K562 (cell line): ENCODE measurements at regions of chr7 and their contacts with region 1.

Region 1: DNA sequence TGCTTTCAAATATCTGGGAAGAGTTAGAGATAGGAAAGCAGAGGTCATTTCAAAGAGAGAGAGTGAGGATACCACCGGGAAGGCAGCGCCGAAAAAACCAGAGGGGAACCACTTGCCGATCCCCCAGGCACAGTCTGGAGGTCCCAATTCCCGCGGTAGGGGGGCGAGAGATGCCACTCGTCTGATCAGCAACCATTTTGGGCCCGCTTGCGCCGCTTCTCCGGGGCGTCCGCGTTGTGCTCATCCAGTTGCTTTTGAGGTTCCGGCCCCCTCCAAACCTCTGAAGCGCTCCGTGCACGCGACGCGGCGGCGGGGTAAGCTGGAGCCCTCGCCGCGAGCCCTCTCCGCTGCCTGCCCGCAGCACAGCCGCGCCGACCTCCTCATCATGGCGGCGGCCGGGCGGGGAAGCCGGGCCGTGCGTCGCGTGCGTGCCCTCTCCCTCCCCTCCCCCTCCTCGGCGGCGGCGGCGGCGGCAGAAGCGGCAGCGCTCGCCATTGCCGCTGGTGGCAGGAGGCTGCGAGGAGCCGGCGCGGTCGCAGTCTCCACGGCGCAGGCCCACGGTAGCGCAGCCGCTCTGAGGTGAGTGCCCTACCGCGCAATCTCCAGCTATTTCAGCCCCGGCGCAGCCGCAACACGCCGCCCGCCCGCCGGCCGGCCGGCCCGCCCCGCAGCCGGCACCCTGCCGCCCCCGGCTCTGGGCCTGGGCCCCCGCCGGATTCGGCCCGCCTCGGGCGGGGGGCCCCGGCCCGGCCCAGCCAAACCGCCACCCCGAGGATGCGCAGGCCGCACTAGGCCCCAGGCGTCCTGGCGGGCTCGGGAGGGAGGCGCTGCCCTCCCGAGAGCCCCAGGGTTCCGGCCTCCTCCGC is at the start of gene NRF1:
- DNase-seq: peak; percentile 93 to 97 (median 94)
- ATAC-seq: peak; percentile 92
- H3K4me3 ChIP-seq: peak within 1 kb of the TSS; percentile 78
- H3K27ac ChIP-seq: peak within 1 kb of the TSS; percentile 93
- H3K4me1 ChIP-seq: peaks cover 18 to 33% of the 10 kb centered on the region in 2 experiments
- H3K27me3 ChIP-seq: no peaks in the 10 kb centered on the region
- CTCF ChIP-seq: peak; percentile 14 to 53 (median 41); a peak in 3 of 6 replicates
- EP300 ChIP-seq: peak; percentile 36; the same call in 1 of the 2 replicates
- POLR2A ChIP-seq: peak; percentile 93
- RAD21 ChIP-seq: no peak
- polyA plus RNA-seq, gene NRF1: 8.6 to 8.9 TPM

Region 2: GRCh38 chr7:129494041-129494440 is 117.4 kb before region 1 on chr7:
- CTCF ChIA-PET with region 1: no interaction called
- POLR2A ChIA-PET with region 1: no interaction called
- in situ Hi-C with region 1: no loop called
- intact Hi-C with region 1: loop called (anchors 5 kb)
- DNase-seq: no peak
- ATAC-seq: no peak
- H3K4me3 ChIP-seq: no peak overlapping the region
- H3K27ac ChIP-seq: no peak overlapping the region
- H3K4me1 ChIP-seq: no peaks in the 10 kb centered on the region; a peak in 1 of 5 replicates
- H3K27me3 ChIP-seq: no peaks in the 10 kb centered on the region
- CTCF ChIP-seq: no peak
- EP300 ChIP-seq: no peak
- POLR2A ChIP-seq: no peak
- RAD21 ChIP-seq: no peak

Region 3: GRCh38 chr7:129644634-129645230 is 33.3 kb after region 1 on chr7:
- CTCF ChIA-PET with region 1: no interaction called
- POLR2A ChIA-PET with region 1: interaction called, 4 read pairs
- in situ Hi-C with region 1: no loop called
- intact Hi-C with region 1: loop called (anchors 2 kb)
- DNase-seq: peak in 3 of 4 experiments; percentile 31 to 71 (median 35)
- ATAC-seq: peak; percentile 81
- H3K4me3 ChIP-seq: no peak overlapping the region
- H3K27ac ChIP-seq: no peak overlapping the region
- H3K4me1 ChIP-seq: no peaks in the 10 kb centered on the region
- H3K27me3 ChIP-seq: no peaks in the 10 kb centered on the region
- CTCF ChIP-seq: peak; percentile 61 to 86 (median 66); a peak in 5 of 6 replicates
- EP300 ChIP-seq: no peak
- POLR2A ChIP-seq: no peak
- RAD21 ChIP-seq: peak; percentile 86 to 91

Region 4: DNA sequence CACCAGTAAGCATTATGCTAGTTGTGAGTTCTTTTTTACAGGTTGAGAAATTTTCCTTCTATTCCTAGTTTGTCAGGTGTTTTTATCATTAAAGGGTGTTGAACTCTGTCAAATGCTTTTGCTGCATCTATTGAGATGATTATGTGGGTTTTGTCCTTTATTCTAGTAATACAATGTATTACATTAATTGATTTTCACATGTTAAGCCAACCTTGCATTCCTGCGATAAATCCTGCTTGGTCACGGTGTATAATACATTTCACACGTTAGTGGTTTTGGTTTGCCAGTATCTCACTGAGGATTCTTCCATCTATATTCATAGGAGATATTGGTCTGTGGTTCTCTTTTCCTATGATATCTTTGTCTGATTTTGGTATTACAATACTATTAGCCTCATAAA is 205.3 kb after region 1 on chr7:
- CTCF ChIA-PET with region 1: no interaction called
- POLR2A ChIA-PET with region 1: no interaction called
- in situ Hi-C with region 1: no loop called
- intact Hi-C with region 1: no loop called
- DNase-seq: no peak
- ATAC-seq: no peak
- H3K4me3 ChIP-seq: no peak overlapping the region
- H3K27ac ChIP-seq: no peak overlapping the region
- H3K4me1 ChIP-seq: no peaks in the 10 kb centered on the region; a peak in 2 of 5 replicates
- H3K27me3 ChIP-seq: 0 out of 5 replicates have a peak, but pooled peaks cover 0 to under 1% of the 10 kb centered on the region in 2 experiments
- CTCF ChIP-seq: no peak
- EP300 ChIP-seq: no peak
- POLR2A ChIP-seq: no peak
- RAD21 ChIP-seq: no peak

Region 5: DNA sequence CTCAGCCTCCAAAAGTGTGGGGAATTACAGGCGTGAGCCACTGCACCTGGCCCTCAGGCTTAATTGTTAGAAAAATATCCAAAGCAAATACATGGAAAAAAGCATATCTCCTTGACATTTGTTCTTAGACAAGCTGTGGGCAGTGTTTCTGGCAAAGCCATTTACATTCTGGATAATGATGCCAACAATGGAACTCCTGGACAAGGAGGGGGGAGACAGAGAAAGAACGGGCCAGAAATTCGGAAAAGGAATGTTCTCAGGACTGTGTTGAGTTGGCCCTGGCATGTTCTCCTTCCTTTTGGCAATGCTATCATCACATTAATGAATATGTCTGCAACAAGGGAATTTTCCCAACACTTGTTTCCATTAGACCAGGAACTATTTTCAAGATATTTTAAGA is 252.6 kb after region 1 on chr7:
- CTCF ChIA-PET with region 1: no interaction called
- POLR2A ChIA-PET with region 1: no interaction called
- in situ Hi-C with region 1: no loop called
- intact Hi-C with region 1: no loop called
- DNase-seq: no peak
- ATAC-seq: no peak
- H3K4me3 ChIP-seq: no peak overlapping the region
- H3K27ac ChIP-seq: no peak overlapping the region
- H3K4me1 ChIP-seq: peaks cover 11 to 50% of the 10 kb centered on the region in 2 experiments; a peak in 4 of 5 replicates
- H3K27me3 ChIP-seq: no peaks in the 10 kb centered on the region
- CTCF ChIP-seq: no peak
- EP300 ChIP-seq: no peak
- POLR2A ChIP-seq: no peak
- RAD21 ChIP-seq: no peak